ENCODE measurements at regions of chr17 and their contacts with region 1.

Region 1: GRCh38 chr17:80147035-80147836 is at the start of gene EIF4A3:
- DNase-seq: peak; percentile 99
- ATAC-seq: peak; percentile 99
- total RNA-seq, gene EIF4A3: 31.3 TPM

Region 2: GRCh38 chr17:80101011-80101945 is 46.0 kb before region 1 on chr17 and contains the start of gene GAA:
- intact Hi-C with region 1: loop called (anchors 2 kb)
- DNase-seq: peak; percentile 95
- ATAC-seq: peak; percentile 93
- total RNA-seq, gene GAA: 46.0 TPM

Region 3: GRCh38 chr17:80124351-80124981 is 22.8 kb before region 1 on chr17:
- intact Hi-C with region 1: no loop called
- DNase-seq: peak; percentile 52
- ATAC-seq: no peak

Region 4: DNA sequence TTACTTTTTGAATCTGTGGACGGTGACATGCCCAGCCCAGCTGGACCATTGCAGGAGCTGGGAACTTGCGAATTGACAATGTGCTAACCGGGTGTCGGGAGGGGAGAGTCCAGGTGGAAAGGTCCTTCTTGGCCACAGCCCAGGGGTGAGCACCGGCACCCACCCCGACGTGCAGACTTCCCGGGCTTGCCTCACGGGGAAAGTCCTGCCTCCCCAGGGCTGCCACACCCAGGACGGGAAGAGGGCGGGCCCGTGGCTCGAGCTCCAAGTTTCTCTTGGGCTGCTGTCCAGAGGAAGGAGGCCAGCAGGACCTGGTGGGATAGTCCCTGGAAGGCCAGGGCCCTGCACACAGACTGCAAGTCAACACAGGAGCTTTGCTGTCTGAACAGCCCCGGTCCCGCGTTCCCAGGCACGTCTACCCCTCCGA is 40.3 kb after region 1 on chr17:
- intact Hi-C with region 1: no loop called
- DNase-seq: peak; percentile 79
- ATAC-seq: peak; percentile 75

Region 5: GRCh38 chr17:80219763-80220725 is 72.8 kb after region 1 on chr17 and contains the starts of genes SGSH and SLC26A11:
- intact Hi-C with region 1: loop called (anchors 2 kb)
- DNase-seq: peak; percentile 92
- ATAC-seq: peak; percentile 91
- total RNA-seq, gene SGSH: 12.4 TPM
- total RNA-seq, gene SLC26A11: 3.9 TPM

Region 6: GRCh38 chr17:80254396-80255251 is 107.4 kb after region 1 on chr17:
- intact Hi-C with region 1: loop called (anchors 5 kb)
- DNase-seq: peak; percentile 60
- ATAC-seq: no peak

Region 7: GRCh38 chr17:80265205-80266068 is 118.2 kb after region 1 on chr17:
- intact Hi-C with region 1: no loop called
- DNase-seq: no peak
- ATAC-seq: no peak

Measured in Right ventricle myocardium inferior (tissue), 1 donor.